PC-3 (cell line): ENCODE measurements at regions of chr6 and their contacts with region 1.

Region 1: GRCh38 chr6:14117158-14118090 is at the start of gene CD83:
- DNase-seq: peak; percentile 72
- ATAC-seq: peak; percentile 80
- H3K4me3 ChIP-seq: peak within 1 kb of the TSS; percentile 89
- H3K27ac ChIP-seq: no peak within 1 kb of the TSS
- H3K4me1 ChIP-seq: peaks cover 8% of the 10 kb centered on the region; the same call in 1 of the 2 replicates
- H3K27me3 ChIP-seq: no peaks in the 10 kb centered on the region
- CTCF ChIP-seq: peak; percentile 52
- total RNA-seq, gene CD83: 13.0 and 15.2 TPM in 2 replicates

Region 2: DNA sequence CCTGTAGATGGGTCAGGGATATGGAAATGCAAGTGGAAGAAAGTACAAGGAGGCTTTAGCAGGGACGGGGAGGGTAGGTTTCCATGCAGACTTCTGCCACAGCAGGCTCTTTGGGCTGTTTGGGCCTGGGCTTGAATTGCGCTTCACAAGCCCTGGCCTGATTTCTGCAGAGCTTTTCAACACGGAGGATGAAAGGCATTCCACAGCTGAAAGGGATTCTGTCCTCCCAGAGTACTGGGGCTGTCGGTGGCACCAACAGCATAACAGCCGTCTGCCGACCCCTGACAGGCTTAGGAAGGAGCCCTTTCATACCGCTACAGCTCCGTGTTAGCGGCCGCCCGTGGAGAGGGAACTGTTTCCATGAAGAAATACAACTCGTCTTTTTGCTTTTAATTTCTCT is 766.2 kb before region 1 on chr6:
- CTCF ChIA-PET with region 1: no interaction called
- POLR2A ChIA-PET with region 1: no interaction called
- intact Hi-C with region 1: no loop called
- DNase-seq: no peak
- ATAC-seq: no peak
- H3K4me3 ChIP-seq: no peak overlapping the region
- H3K27ac ChIP-seq: no peak overlapping the region
- H3K4me1 ChIP-seq: peaks cover 27% of the 10 kb centered on the region
- H3K27me3 ChIP-seq: no peaks in the 10 kb centered on the region
- CTCF ChIP-seq: no peak

Region 3: GRCh38 chr6:14075095-14075503 is 42.3 kb before region 1 on chr6:
- CTCF ChIA-PET with region 1: no interaction called
- POLR2A ChIA-PET with region 1: interaction called, 5 read pairs
- intact Hi-C with region 1: loop called (anchors 2 kb)
- DNase-seq: peak; percentile 37
- ATAC-seq: peak; percentile 80
- H3K4me3 ChIP-seq: peak overlapping the region; percentile 71
- H3K27ac ChIP-seq: no peak overlapping the region
- H3K4me1 ChIP-seq: peaks cover 7% of the 10 kb centered on the region
- H3K27me3 ChIP-seq: no peaks in the 10 kb centered on the region
- CTCF ChIP-seq: no peak